ENCODE measurements at regions of chr12 and their contacts with region 1.

Region 1: DNA sequence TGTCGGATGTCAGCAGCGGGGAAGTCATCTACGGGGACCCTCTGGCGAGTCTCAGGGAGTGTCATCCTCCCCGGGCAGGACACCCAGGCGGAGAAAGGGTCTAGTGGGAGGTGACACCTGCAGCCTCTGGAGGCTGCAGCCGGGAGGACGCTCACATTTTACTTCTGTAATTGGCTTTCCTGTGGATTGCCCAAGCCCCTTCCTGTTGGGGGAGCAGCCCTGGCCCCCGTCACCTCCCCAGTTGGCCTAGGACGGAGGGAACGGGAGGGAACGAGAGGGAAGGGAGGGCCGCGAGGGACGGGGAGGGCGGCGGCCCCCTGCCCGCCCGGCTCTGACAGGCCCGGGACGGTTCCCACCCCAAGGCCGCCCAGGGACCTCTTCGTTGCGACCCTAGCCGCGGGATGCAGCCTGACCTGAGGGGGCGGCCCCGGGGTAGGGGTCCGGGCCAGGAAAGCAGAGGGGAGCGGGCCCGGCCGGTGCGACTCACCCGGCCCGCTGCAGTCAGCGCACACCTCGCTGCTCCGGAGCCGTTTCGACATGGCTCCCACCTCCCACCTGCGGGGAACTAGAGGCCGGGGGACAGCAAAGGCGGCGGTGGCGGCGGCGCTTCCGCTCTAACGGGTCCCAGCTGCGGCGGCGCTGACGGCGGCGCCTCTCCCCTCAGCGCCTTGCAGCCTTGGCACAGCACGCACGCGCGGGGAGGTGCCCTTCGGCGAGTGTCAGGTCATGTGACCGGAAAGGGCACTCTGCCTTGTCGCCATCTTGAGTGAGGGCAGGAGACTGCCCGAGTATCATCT is at the start of gene GIT2:
- DNase-seq: peak; percentile 79 to 97
- H3K4me3 ChIP-seq: peak within 1 kb of the TSS; percentile 75 to 98
- H3K27ac ChIP-seq: peak within 1 kb of the TSS; percentile 77 to 78
- H3K4me1 ChIP-seq: peaks cover 7 to 13% of the 10 kb centered on the region in 2 donors
- H3K27me3 ChIP-seq: no peaks in the 10 kb centered on the region
- CTCF ChIP-seq: no peak
- total RNA-seq, gene GIT2: 44.9 TPM

Region 2: DNA sequence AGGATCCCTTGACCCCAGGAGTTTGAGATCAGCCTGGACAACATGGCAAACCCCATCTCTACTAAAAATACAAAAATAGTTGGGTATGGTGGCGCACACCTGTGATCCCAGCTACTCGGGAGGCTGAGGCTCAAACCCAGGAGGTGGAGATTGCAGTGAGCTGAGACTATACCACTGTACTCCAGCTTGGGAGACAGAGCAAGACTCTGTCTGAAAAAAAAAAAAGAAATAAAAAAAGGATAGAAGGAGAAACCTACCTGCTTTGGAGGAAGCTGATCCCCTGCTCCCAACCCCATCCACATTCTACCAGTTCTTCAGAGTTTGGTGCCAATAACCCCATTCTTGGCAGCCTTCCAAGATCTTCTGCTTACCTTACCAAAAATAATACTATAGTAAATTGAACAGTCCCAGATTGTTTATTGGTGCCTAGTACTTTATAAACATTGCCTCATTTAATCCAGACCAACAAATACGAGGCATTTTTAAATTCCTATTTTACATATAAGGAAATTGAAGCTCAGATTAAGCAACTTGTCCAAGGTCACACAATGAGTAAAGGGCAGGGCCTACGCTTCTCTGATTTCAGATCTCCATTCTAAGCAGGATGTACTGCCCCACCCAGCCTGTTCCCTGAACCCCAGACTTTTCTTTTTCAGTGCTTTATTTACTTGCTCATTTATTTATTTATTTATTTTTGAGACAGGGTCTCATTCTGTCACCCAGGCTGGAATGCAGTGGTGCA is 315.4 kb before region 1 on chr12:
- intact Hi-C with region 1: no loop called
- DNase-seq: no peak
- H3K4me3 ChIP-seq: no peak overlapping the region
- H3K27ac ChIP-seq: no peak overlapping the region
- H3K4me1 ChIP-seq: no peaks in the 10 kb centered on the region
- H3K27me3 ChIP-seq: no peaks in the 10 kb centered on the region
- CTCF ChIP-seq: no peak

Region 3: GRCh38 chr12:109888179-109889020 is 107.5 kb before region 1 on chr12:
- intact Hi-C with region 1: no loop called
- DNase-seq: no peak
- H3K4me3 ChIP-seq: no peak overlapping the region
- H3K27ac ChIP-seq: peak overlapping the region in 1 of 2 donors; percentile 22
- H3K4me1 ChIP-seq: no peaks in the 10 kb centered on the region
- H3K27me3 ChIP-seq: no peaks in the 10 kb centered on the region
- CTCF ChIP-seq: no peak

Region 4: GRCh38 chr12:109899783-109900751 is 95.8 kb before region 1 on chr12 and contains the start of gene TCHP:
- intact Hi-C with region 1: loop called (anchors 5 kb)
- DNase-seq: peak; percentile 37 to 92
- H3K4me3 ChIP-seq: peak within 1 kb of the TSS; percentile 79 to 97
- H3K27ac ChIP-seq: peak within 1 kb of the TSS; percentile 69 to 71
- H3K4me1 ChIP-seq: peaks cover 0 to 8% of the 10 kb centered on the region in 2 donors
- H3K27me3 ChIP-seq: no peaks in the 10 kb centered on the region
- CTCF ChIP-seq: peak in 2 of 3 experiments; percentile 4 to 34
- total RNA-seq, gene TCHP: 4.2 TPM

Region 5: GRCh38 chr12:109951751-109952150 is 44.1 kb before region 1 on chr12:
- intact Hi-C with region 1: loop called (anchors 2 kb)
- DNase-seq: no peak
- H3K4me3 ChIP-seq: no peak overlapping the region
- H3K27ac ChIP-seq: peak overlapping the region; percentile 77 to 78
- H3K4me1 ChIP-seq: peaks cover 13 to 32% of the 10 kb centered on the region in 2 donors
- H3K27me3 ChIP-seq: no peaks in the 10 kb centered on the region
- CTCF ChIP-seq: no peak

Region 6: DNA sequence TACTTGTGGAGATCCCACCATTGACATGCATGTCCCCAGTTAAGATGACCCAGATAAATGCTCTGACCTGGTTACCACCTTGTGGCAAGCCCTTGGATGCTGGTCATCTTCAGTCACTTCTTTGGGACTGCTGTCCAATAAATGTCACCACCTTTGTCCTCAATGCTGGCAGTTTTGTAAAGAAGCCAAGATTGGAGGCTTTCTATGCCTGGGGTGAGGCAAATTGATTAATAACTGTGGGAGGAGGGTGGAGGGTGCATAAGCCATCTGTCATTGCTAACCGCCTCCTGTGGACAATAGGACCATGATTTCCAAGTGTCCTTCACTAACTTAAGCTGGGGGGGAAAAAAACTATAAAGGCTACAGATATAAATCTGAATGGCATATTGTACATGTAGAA is 27.7 kb after region 1 on chr12:
- intact Hi-C with region 1: loop called (anchors 1 kb)
- DNase-seq: no peak
- H3K4me3 ChIP-seq: no peak overlapping the region
- H3K27ac ChIP-seq: peak overlapping the region; percentile 37 to 72
- H3K4me1 ChIP-seq: peaks cover 0 to 22% of the 10 kb centered on the region in 2 donors
- H3K27me3 ChIP-seq: no peaks in the 10 kb centered on the region
- CTCF ChIP-seq: no peak

Region 7: GRCh38 chr12:110048242-110049027 is 52.6 kb after region 1 on chr12 and contains the start of gene C12orf76:
- intact Hi-C with region 1: loop called (anchors 2 kb)
- DNase-seq: peak; percentile 79 to 96
- H3K4me3 ChIP-seq: peak within 1 kb of the TSS; percentile 77 to 99
- H3K27ac ChIP-seq: peak within 1 kb of the TSS; percentile 51 to 77
- H3K4me1 ChIP-seq: peaks cover 0 to 13% of the 10 kb centered on the region in 2 donors
- H3K27me3 ChIP-seq: no peaks in the 10 kb centered on the region
- CTCF ChIP-seq: no peak
- total RNA-seq, gene C12orf76: 0.96 TPM

Region 8: GRCh38 chr12:110449799-110450497 is 454.1 kb after region 1 on chr12 and contains the start of gene ARPC3:
- intact Hi-C with region 1: loop called (anchors 5 kb)
- DNase-seq: peak; percentile 76 to 98
- H3K4me3 ChIP-seq: peak within 1 kb of the TSS; percentile 92 to 96
- H3K27ac ChIP-seq: peak within 1 kb of the TSS; percentile 92 to 98
- H3K4me1 ChIP-seq: peaks cover 4 to 17% of the 10 kb centered on the region in 2 donors
- H3K27me3 ChIP-seq: no peaks in the 10 kb centered on the region
- CTCF ChIP-seq: peak; percentile 90 to 95 (median 92)
- total RNA-seq, gene ARPC3: 76.5 TPM